Esophagus squamous epithelium (tissue), 5 donors: ENCODE measurements at regions of chr17 and their contacts with region 1.

Region 1: GRCh38 chr17:67376737-67377487 is at the start of gene PITPNC1:
- DNase-seq: peak; percentile 34
- H3K4me3 ChIP-seq: peak within 1 kb of the TSS; percentile 69 to 98 (median 89)
- H3K27ac ChIP-seq: peak within 1 kb of the TSS; percentile 93 to 97 (median 96)
- H3K4me1 ChIP-seq: peaks cover 7 to 42% (median 20%) of the 10 kb centered on the region in 3 donors
- H3K27me3 ChIP-seq: no peaks in the 10 kb centered on the region
- CTCF ChIP-seq: peak in 3 of 6 experiments; percentile 19 to 31 (median 23)
- POLR2A ChIP-seq: peak in 2 of 4 donors; percentile 86 to 89
- total RNA-seq, gene PITPNC1: 9.1 to 15.1 (median 13.3) TPM

Region 2: GRCh38 chr17:67475236-67475937 is 98.5 kb after region 1 on chr17:
- intact Hi-C with region 1: loop called (anchors 2 kb)
- DNase-seq: no peak
- H3K4me3 ChIP-seq: no peak overlapping the region
- H3K27ac ChIP-seq: peak overlapping the region in 3 of 4 donors; percentile 54 to 63 (median 57)
- H3K4me1 ChIP-seq: peaks cover 0 to 47% (median 18%) of the 10 kb centered on the region in 3 donors
- H3K27me3 ChIP-seq: no peaks in the 10 kb centered on the region
- CTCF ChIP-seq: peak; percentile 85 to 98 (median 91)
- POLR2A ChIP-seq: no peak

Region 3: DNA sequence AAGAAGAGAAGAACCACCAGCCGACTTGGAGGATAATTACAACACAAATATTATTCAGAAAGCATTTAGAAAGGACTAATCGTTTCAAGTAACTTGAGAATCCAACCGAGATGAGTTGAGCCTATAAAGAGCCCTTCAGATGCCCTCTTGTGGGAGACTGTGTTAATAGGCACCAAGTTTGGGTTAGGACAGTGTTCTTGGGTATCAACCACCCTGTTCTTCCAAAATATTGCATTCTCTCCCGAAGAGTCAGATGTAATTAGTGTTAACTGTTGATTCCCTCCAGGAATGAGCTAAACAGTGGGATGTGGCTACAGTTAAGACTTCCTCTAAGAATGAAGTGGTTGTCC is 253.0 kb after region 1 on chr17:
- intact Hi-C with region 1: loop called (anchors 5 kb)
- DNase-seq: no peak
- H3K4me3 ChIP-seq: no peak overlapping the region
- H3K27ac ChIP-seq: peak overlapping the region in 3 of 4 donors; percentile 32 to 65 (median 45)
- H3K4me1 ChIP-seq: peaks cover 0 to 35% (median 7%) of the 10 kb centered on the region in 3 donors
- H3K27me3 ChIP-seq: no peaks in the 10 kb centered on the region
- CTCF ChIP-seq: peak in 5 of 6 experiments; percentile 8 to 60 (median 39)
- POLR2A ChIP-seq: no peak

Region 4: GRCh38 chr17:67689534-67690177 is 312.7 kb after region 1 on chr17:
- intact Hi-C with region 1: loop called (anchors 5 kb)
- DNase-seq: no peak
- H3K4me3 ChIP-seq: no peak overlapping the region
- H3K27ac ChIP-seq: no peak overlapping the region
- H3K4me1 ChIP-seq: peaks cover 0 to 6% (median 0%) of the 10 kb centered on the region in 3 donors
- H3K27me3 ChIP-seq: no peaks in the 10 kb centered on the region
- CTCF ChIP-seq: peak; percentile 60 to 91 (median 80)
- POLR2A ChIP-seq: no peak